ENCODE measurements at regions of chr6 and their contacts with region 1.

Region 1: GRCh38 chr6:28080631-28081485 is 490 bp downstream of the ZNF165 start:
- DNase-seq: peak; percentile 94 to 97 (median 95)
- ATAC-seq: peak; percentile 97 to 99 (median 99)
- H3K4me3 ChIP-seq: peak overlapping the region; percentile 56 to 94 (median 77)
- H3K27ac ChIP-seq: peak overlapping the region; percentile 59 to 91 (median 86)
- H3K4me1 ChIP-seq: peaks cover 0 to 16% (median 6%) of the 10 kb centered on the region in 12 donors
- H3K27me3 ChIP-seq: no peaks in the 10 kb centered on the region
- CTCF ChIP-seq: peak in 1 of 12 donors; percentile 6
- POLR2A ChIP-seq: peak in 1 of 2 donors; percentile 48

Region 2: DNA sequence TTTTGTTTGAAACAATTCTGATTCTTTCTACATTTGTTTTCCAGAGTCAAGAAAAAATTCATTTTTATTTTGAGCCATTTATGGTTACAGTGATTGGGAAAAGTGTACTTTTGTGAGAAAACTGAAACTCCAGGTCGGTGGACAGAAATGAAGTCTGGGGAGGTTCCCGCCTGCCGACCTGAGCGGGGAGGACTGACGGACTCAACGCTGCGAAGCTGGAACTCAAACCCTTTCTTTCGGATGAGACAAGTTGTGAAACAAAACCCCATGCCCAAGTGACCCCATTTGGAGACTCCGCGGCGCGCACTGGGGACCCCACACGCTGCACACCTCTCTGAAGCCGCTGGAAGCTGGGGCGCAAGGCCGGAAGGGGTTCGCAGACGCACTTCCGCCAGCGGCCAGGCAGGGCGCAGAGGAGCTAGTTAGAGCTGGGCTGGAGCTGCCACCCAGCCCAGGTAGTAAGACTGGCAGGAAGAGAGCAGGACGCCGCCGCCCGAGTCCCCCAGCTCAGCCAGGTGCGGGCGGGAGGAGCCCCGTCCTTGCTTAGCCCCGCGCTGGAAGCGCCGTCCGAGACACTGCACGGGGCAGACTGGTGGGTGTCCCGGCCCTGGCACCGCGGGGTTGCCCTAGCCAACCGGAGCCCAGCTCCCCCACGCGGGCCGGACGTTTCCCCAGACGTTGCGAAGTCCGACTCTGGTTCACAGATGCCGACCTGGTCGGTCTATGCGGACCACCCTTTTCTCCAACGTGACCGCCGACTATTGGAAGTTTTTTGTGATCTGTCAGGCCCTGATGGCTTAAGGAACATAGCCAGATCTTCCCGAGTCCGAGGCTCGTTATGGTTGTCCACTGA is 23.8 kb after region 1 on chr6:
- intact Hi-C with region 1: loop called in 2 of 10 experiments (anchors 1 to 2 kb)
- DNase-seq: peak; percentile 76 to 89 (median 80)
- ATAC-seq: peak; percentile 94 to 100 (median 100)
- H3K4me3 ChIP-seq: peak overlapping the region; percentile 51 to 94 (median 79)
- H3K27ac ChIP-seq: peak overlapping the region; percentile 26 to 89 (median 76)
- H3K4me1 ChIP-seq: peaks cover 0 to 7% (median 5%) of the 10 kb centered on the region in 12 donors
- H3K27me3 ChIP-seq: no peaks in the 10 kb centered on the region
- CTCF ChIP-seq: peak; percentile 23 to 72 (median 54)
- POLR2A ChIP-seq: peak in 1 of 2 donors; percentile 76